PC-9 (cell line): ENCODE measurements at regions of chr16 and their contacts with region 1.

Region 1: GRCh38 chr16:74862741-74863244 is 88.2 kb upstream of the FA2H start:
- DNase-seq: peak; percentile 26 to 41
- H3K4me3 ChIP-seq: no peak overlapping the region
- H3K27ac ChIP-seq: no peak overlapping the region
- H3K4me1 ChIP-seq: no peaks in the 10 kb centered on the region
- H3K27me3 ChIP-seq: no peaks in the 10 kb centered on the region
- CTCF ChIP-seq: peak; percentile 97

Region 2: DNA sequence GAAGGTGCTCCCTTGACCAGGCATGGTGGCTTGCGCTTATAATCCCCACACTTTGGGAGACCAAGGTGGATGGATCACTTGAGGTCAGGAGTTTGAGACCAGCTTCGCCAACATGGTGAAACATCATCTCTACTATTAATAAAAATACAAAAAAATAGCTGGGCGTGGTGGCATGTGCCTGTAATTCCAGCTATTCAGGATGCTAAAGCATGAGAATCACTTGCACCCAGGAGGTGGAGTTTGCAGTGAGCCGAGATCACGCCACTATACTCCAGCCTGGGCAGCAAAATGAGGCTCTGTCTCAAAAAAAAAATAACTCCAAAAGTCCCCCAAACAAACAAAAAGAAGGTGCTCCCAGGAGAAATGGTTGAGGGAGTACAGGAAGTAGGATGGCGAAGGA is 183.3 kb before region 1 on chr16:
- CTCF ChIA-PET with region 1: interaction called, 11 read pairs
- POLR2A ChIA-PET with region 1: no interaction called
- intact Hi-C with region 1: no loop called
- DNase-seq: no peak
- H3K4me3 ChIP-seq: no peak overlapping the region
- H3K27ac ChIP-seq: no peak overlapping the region
- H3K4me1 ChIP-seq: no peaks in the 10 kb centered on the region
- H3K27me3 ChIP-seq: no peaks in the 10 kb centered on the region
- CTCF ChIP-seq: no peak

Region 3: GRCh38 chr16:74700438-74701225 is 162.2 kb before region 1 on chr16 and contains the start of gene MLKL:
- CTCF ChIA-PET with region 1: interaction called, 10 read pairs
- POLR2A ChIA-PET with region 1: no interaction called
- intact Hi-C with region 1: no loop called
- DNase-seq: peak; percentile 55 to 59
- H3K4me3 ChIP-seq: peak within 1 kb of the TSS; percentile 74
- H3K27ac ChIP-seq: peak within 1 kb of the TSS; percentile 74
- H3K4me1 ChIP-seq: peaks cover 30% of the 10 kb centered on the region
- H3K27me3 ChIP-seq: no peaks in the 10 kb centered on the region
- CTCF ChIP-seq: no peak; the same call in 1 of the 2 replicates
- total RNA-seq, gene MLKL: 6.8 and 11.2 TPM in 2 replicates

Region 4: DNA sequence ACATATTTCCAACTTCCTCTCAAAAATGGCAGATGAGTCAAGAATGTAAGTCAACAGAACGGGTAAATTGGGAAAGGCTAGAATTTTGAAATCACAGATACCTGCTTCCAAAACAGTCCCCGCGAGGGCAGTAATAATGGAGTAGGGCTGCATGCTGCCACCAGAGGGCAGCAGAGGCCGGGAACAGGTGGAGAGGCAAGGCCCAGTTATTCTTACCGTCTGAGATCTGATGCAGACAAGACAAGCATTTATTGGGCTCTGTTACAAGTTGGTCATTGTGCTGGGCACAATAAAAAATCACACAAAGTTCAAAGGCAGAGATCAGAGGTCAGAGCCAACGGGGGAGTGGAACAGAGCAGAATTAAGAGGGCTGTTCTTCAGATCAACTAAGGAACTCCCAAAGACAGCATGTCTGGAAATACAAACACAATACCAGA is 153.3 kb before region 1 on chr16:
- CTCF ChIA-PET with region 1: interaction called, 6 read pairs
- POLR2A ChIA-PET with region 1: no interaction called
- intact Hi-C with region 1: loop called (anchors 1 kb)
- DNase-seq: peak; percentile 79 to 81
- H3K4me3 ChIP-seq: no peak overlapping the region
- H3K27ac ChIP-seq: no peak overlapping the region
- H3K4me1 ChIP-seq: peaks cover 4% of the 10 kb centered on the region; the same call in 1 of the 2 replicates
- H3K27me3 ChIP-seq: no peaks in the 10 kb centered on the region
- CTCF ChIP-seq: peak; percentile 98

Region 5: GRCh38 chr16:74752756-74753155 is 110.0 kb before region 1 on chr16:
- CTCF ChIA-PET with region 1: interaction called, 13 read pairs
- POLR2A ChIA-PET with region 1: no interaction called
- intact Hi-C with region 1: no loop called
- DNase-seq: no peak
- H3K4me3 ChIP-seq: no peak overlapping the region
- H3K27ac ChIP-seq: no peak overlapping the region
- H3K4me1 ChIP-seq: no peaks in the 10 kb centered on the region
- H3K27me3 ChIP-seq: no peaks in the 10 kb centered on the region
- CTCF ChIP-seq: no peak

Region 6: DNA sequence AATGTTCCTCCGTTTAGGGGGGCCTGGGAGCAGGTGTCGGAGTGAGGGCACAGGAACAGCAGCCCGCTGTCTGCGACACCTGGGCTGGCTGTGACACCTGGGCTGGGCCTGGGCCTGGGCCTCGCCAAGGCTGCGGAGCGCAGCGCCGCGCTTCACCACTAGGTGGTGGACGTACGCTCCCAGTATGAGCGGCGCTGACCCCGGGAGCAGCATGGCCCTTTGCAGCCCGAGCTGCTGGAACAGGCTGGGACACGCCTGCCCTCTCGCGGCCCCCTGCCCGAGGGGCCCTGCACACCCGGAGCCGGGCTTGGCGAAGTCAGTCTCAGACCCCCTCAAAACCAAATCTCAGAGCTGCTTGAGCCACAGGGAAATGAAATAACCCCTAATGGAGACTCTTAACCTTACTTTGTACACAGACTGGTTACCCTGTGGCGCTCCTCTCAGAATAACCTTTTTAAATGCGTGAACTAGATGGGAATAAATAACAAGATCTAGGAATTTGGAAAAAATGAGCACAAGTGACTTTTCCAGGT is 49.6 kb before region 1 on chr16:
- CTCF ChIA-PET with region 1: interaction called, 10 read pairs
- POLR2A ChIA-PET with region 1: no interaction called
- intact Hi-C with region 1: loop called (anchors 1 kb)
- DNase-seq: peak; percentile 60 to 85
- H3K4me3 ChIP-seq: no peak overlapping the region; the same call in 1 of the 2 replicates
- H3K27ac ChIP-seq: no peak overlapping the region
- H3K4me1 ChIP-seq: no peaks in the 10 kb centered on the region
- H3K27me3 ChIP-seq: no peaks in the 10 kb centered on the region
- CTCF ChIP-seq: peak; percentile 93

Region 7: DNA sequence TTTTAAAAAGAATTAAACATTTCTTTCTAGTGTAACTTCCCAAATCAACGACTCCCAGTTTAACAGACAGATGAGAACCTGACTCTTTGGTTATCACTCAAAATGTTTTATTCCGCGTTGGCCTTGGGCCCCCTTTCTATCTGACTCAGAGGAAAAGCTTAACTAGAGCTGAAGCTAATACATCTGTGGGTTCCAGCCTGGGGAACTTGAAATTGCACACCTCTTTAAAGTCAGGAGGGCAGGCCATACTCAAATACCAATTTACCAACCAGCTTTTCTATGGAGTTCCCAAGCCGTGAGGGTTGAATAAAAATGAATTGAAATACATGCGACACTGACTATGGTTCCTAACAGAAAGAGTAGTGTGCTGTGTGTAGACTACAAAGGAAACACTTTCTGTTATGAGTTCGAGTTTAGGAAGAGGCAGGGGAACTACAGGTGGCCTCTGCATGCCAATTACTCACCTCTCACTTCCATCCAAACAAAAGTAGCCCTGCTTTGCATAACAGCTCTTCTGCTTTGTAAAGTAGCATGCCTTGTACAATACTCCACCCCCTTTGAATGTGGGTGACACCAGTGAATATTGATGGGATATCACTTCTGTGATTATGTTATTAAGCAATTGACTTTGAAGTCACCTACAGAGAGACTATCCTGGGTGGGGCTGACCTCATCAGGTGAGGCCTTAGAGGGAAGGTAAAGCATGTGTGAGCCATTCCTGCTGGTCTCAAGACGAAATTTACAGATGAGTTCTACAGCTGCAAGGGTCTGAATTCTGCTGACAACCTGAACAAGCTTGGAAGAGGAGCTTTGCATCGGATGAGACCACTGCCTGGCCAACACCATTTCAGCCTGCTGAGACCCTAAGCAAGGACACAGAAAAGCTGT is 30.0 kb after region 1 on chr16:
- CTCF ChIA-PET with region 1: no interaction called
- POLR2A ChIA-PET with region 1: no interaction called
- intact Hi-C with region 1: no loop called
- DNase-seq: no peak
- H3K4me3 ChIP-seq: no peak overlapping the region
- H3K27ac ChIP-seq: no peak overlapping the region
- H3K4me1 ChIP-seq: 0 out of 2 replicates have a peak, but pooled peaks cover 4% of the 10 kb centered on the region
- H3K27me3 ChIP-seq: no peaks in the 10 kb centered on the region
- CTCF ChIP-seq: no peak

Region 8: DNA sequence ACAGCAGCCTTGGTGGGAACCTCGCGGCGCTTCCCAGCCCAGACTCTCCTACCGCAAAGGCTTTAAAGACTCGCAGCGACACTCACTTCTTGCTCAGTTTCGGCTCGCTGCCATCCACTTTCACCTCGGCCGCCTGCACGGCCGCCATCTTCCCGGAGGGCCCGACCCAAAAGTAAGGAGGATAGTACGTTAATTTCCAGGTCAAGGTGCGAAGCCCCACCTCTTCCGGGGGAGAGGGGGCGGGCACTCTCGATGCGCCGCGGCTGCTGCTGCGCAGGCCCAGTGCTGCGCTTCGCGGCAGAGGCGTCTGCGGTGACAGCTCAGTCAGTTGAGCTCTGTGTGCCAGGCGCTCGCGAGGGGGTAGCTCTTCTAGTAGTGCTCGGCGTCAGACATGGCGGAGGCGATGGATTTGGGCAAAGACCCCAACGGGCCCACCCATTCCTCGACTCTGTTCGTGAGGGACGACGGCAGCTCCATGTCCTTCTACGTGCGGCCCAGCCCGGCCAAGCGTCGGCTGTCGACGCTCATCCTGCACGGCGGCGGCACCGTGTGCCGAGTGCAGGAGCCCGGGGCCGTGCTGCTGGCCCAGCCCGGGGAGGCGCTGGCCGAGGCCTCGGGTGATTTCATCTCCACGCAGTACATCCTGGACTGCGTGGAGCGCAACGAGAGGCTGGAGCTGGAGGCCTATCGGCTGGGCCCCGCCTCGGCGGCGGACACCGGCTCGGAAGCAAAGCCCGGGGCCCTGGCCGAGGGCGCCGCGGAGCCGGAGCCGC is 784.9 kb after region 1 on chr16 and contains the starts of genes KARS1 and TERF2IP:
- CTCF ChIA-PET with region 1: no interaction called
- POLR2A ChIA-PET with region 1: interaction called, 12 read pairs
- intact Hi-C with region 1: no loop called
- DNase-seq: peak; percentile 83 to 91
- H3K4me3 ChIP-seq: peak within 1 kb of the TSS; percentile 98
- H3K27ac ChIP-seq: peak within 1 kb of the TSS; percentile 67
- H3K4me1 ChIP-seq: peaks cover 27% of the 10 kb centered on the region
- H3K27me3 ChIP-seq: no peaks in the 10 kb centered on the region
- CTCF ChIP-seq: no peak
- total RNA-seq, gene KARS1: 101 and 132 TPM in 2 replicates
- total RNA-seq, gene TERF2IP: 16.9 and 19.3 TPM in 2 replicates